ENCODE measurements at regions of chr22 and their contacts with region 1.

Region 1: GRCh38 chr22:36387752-36388518 is at the start of gene MYH9:
- DNase-seq: peak; percentile 98
- ATAC-seq: peak; percentile 91
- H3K4me3 ChIP-seq: peak within 1 kb of the TSS; percentile 87 to 98 (median 90)
- H3K27ac ChIP-seq: peak within 1 kb of the TSS; percentile 70
- H3K4me1 ChIP-seq: peaks cover 51% of the 10 kb centered on the region
- H3K27me3 ChIP-seq: no peaks in the 10 kb centered on the region
- CTCF ChIP-seq: no peak
- EP300 ChIP-seq: no peak
- POLR2A ChIP-seq: peak; percentile 95 to 98
- RAD21 ChIP-seq: peak; percentile 46; the same call in 1 of the 2 replicates
- total RNA-seq, gene MYH9: 98.5 and 125 TPM in 2 replicates

Region 2: GRCh38 chr22:36350751-36351594 is 37.0 kb before region 1 on chr22:
- CTCF ChIA-PET with region 1: no interaction called
- POLR2A ChIA-PET with region 1: interaction called, 36 read pairs
- in situ Hi-C with region 1: no loop called
- intact Hi-C with region 1: no loop called
- DNase-seq: peak; percentile 91
- ATAC-seq: peak; percentile 68
- H3K4me3 ChIP-seq: peak overlapping the region; percentile 9 to 66 (median 28)
- H3K27ac ChIP-seq: peak overlapping the region; percentile 94
- H3K4me1 ChIP-seq: peaks cover 93% of the 10 kb centered on the region
- H3K27me3 ChIP-seq: no peaks in the 10 kb centered on the region; a peak in 1 of 5 replicates
- CTCF ChIP-seq: peak; percentile 24; the same call in 1 of the 2 replicates
- EP300 ChIP-seq: peak; percentile 42 to 88; a peak in 3 of 4 replicates
- POLR2A ChIP-seq: no peak; a peak in 1 of 4 replicates
- RAD21 ChIP-seq: 0 out of 2 replicates have a peak, but pooled peaks have one; percentile 22

Region 3: GRCh38 chr22:36365020-36365411 is 22.9 kb before region 1 on chr22:
- CTCF ChIA-PET with region 1: no interaction called
- POLR2A ChIA-PET with region 1: interaction called, 23 read pairs
- in situ Hi-C with region 1: no loop called
- intact Hi-C with region 1: loop called (anchors 2 kb)
- DNase-seq: no peak
- ATAC-seq: no peak
- H3K4me3 ChIP-seq: no peak overlapping the region
- H3K27ac ChIP-seq: peak overlapping the region; percentile 76
- H3K4me1 ChIP-seq: peaks cover 100% of the 10 kb centered on the region
- H3K27me3 ChIP-seq: no peaks in the 10 kb centered on the region
- CTCF ChIP-seq: no peak
- EP300 ChIP-seq: peak in 1 of 2 experiments; percentile 22; a peak in 1 of 4 replicates
- POLR2A ChIP-seq: no peak
- RAD21 ChIP-seq: no peak

Region 4: DNA sequence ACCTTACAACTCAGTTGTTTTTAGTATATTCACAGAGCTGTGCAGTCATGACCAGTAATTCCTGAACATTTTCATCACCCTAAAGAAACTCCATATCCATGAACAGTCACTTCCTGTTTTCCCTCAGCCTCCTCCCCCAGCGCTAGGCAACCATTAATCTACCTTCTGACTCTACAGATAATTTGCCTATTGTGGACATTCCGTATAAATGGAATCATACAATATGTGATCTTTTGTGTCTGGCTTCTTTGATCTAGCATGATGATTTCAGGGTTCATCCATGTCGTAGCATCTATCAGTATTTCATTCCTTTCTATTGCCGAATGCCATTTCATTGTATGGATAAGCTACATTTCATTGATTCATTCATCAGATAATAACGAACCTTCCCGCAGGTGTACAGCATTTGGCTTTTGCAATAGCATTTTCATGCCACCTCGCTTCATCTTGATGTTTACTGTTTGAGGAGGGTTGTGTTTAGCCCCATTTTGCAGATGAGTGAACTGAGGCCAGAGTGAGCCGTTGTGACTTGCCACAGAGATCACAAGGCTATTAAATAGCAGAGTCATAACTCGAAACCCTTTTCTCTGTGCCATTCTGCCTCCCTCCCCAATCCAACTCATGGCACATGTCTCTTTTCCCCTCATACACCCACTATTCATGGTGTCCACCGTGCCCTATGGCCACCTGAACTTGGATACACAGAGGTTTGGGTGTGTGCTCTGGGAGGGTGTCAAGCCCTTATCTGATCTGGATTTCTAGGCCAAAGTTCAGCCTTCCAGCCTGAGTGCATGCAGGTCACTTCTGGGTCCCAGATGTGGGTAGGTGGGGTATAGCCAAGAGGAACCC is 10.9 kb after region 1 on chr22:
- CTCF ChIA-PET with region 1: no interaction called
- POLR2A ChIA-PET with region 1: interaction called, 26 read pairs
- in situ Hi-C with region 1: no loop called
- intact Hi-C with region 1: no loop called
- DNase-seq: peak; percentile 51
- ATAC-seq: no peak; the same call in 2 of the 3 replicates
- H3K4me3 ChIP-seq: no peak overlapping the region
- H3K27ac ChIP-seq: no peak overlapping the region
- H3K4me1 ChIP-seq: peaks cover 49% of the 10 kb centered on the region
- H3K27me3 ChIP-seq: no peaks in the 10 kb centered on the region
- CTCF ChIP-seq: no peak
- EP300 ChIP-seq: no peak
- POLR2A ChIP-seq: no peak
- RAD21 ChIP-seq: no peak

Region 5: DNA sequence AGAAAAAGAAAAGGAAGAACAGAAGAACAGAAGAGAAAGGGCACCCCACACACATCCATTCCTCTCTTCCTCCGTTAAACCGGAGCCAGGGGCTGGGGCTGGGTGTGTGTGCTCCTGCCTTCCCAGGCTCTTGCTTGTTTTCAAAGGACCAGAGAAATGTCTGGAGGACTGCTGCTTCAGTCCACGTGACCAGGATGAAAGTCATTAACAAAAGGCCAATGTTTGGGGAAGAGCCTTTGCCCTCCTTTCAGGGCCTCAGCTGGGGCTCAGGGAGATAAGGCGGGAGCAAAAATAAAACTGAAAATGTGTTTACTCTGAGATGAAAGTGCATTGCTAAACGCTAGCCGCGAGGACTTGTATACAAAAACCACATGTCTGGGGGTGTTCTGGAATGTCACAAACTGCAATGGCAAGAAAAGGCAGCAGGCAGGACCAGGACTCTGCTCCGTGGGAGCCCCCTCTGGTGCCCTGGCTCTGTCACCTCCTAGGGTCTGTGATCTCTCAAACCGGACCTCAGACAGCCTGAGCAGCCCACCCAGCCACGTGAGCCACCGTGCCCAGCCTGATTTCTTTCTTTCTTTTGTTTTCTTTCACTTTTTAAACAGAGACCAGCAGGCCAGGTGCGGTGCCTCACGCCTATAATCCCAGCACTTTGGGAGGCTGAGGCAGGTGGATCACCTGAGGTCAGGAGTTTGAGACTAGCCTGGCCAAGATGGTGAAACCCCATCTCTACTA is 31.4 kb after region 1 on chr22:
- CTCF ChIA-PET with region 1: no interaction called
- POLR2A ChIA-PET with region 1: interaction called, 25 read pairs
- in situ Hi-C with region 1: no loop called
- intact Hi-C with region 1: no loop called
- DNase-seq: peak; percentile 100
- ATAC-seq: peak; percentile 88
- H3K4me3 ChIP-seq: peak overlapping the region in 2 of 3 experiments; percentile 49 to 53; a peak in 5 of 6 replicates
- H3K27ac ChIP-seq: peak overlapping the region; percentile 88
- H3K4me1 ChIP-seq: peaks cover 83% of the 10 kb centered on the region
- H3K27me3 ChIP-seq: no peaks in the 10 kb centered on the region
- CTCF ChIP-seq: peak; percentile 34
- EP300 ChIP-seq: peak; percentile 44 to 99; a peak in 3 of 4 replicates
- POLR2A ChIP-seq: peak; percentile 48 to 57; a peak in 3 of 4 replicates
- RAD21 ChIP-seq: peak; percentile 49

Region 6: GRCh38 chr22:36433318-36434231 is 45.6 kb after region 1 on chr22:
- CTCF ChIA-PET with region 1: no interaction called
- POLR2A ChIA-PET with region 1: interaction called, 11 read pairs
- in situ Hi-C with region 1: no loop called
- intact Hi-C with region 1: no loop called
- DNase-seq: peak; percentile 66
- ATAC-seq: peak; percentile 23
- H3K4me3 ChIP-seq: peak overlapping the region; percentile 11 to 66 (median 52); a peak in 5 of 6 replicates
- H3K27ac ChIP-seq: peak overlapping the region; percentile 89
- H3K4me1 ChIP-seq: peaks cover 74% of the 10 kb centered on the region
- H3K27me3 ChIP-seq: no peaks in the 10 kb centered on the region
- CTCF ChIP-seq: 0 out of 2 replicates have a peak, but pooled peaks have one; percentile 6
- EP300 ChIP-seq: peak in 1 of 2 experiments; percentile 93; a peak in 2 of 4 replicates
- POLR2A ChIP-seq: peak in 1 of 2 experiments; percentile 27; a peak in 1 of 4 replicates
- RAD21 ChIP-seq: no peak

Region 7: GRCh38 chr22:36452250-36452977 is 64.5 kb after region 1 on chr22:
- CTCF ChIA-PET with region 1: no interaction called
- POLR2A ChIA-PET with region 1: interaction called, 10 read pairs
- in situ Hi-C with region 1: no loop called
- intact Hi-C with region 1: no loop called
- DNase-seq: no peak
- ATAC-seq: no peak
- H3K4me3 ChIP-seq: no peak overlapping the region
- H3K27ac ChIP-seq: no peak overlapping the region
- H3K4me1 ChIP-seq: peaks cover 80% of the 10 kb centered on the region
- H3K27me3 ChIP-seq: no peaks in the 10 kb centered on the region; a peak in 1 of 5 replicates
- CTCF ChIP-seq: no peak
- EP300 ChIP-seq: no peak
- POLR2A ChIP-seq: no peak
- RAD21 ChIP-seq: no peak